ENCODE measurements at regions of chr16 and their contacts with region 1.

Region 1: DNA sequence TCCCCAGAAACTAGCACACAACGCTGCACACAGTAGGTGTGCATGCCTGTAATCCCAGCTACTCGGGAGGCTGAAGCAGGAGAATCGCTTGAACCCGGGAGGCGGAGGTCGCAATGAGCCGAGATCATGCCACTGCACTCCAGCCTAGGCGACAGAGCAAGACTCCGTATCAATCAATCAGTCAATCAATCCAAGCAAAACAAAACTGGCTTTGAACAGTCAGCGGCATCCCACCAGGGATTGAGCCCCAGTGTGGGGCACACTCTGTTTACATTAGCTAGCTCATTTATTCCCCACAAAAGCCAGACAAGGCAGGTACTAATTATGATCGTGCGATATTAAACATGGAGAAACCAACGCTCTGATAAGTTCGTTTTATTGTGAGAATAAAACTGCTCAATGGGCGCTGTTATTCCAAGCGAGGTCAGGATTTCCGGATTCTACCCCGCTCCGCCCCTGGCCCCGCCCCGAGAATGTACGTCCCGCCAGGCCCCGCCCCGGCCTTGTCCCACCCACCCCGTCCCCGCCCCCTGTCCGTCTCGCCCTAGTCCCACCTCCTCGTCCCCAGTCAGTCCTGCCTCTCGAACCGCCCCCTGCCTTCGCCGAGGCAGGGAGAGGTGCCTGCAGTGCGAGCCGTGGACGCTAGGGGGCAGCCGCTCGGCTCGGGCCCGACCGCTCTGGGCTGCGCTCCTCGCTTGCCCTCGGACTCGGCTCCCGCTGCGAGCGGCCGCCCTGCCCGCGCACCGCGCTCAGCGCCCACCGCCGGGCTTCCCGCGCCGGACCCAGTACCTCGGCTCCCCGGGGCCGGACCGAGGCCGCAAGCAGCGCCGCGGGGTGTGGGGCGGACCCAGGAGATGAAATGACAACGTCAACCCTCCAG is at the start of gene VPS4A:
- DNase-seq: peak; percentile 91 to 97 (median 96)
- H3K4me3 ChIP-seq: peak within 1 kb of the TSS; percentile 62 to 99 (median 91)
- H3K27ac ChIP-seq: peak within 1 kb of the TSS; percentile 46 to 94 (median 88)
- H3K27me3 ChIP-seq: no peaks in the 10 kb centered on the region
- CTCF ChIP-seq: peak; percentile 56 to 96 (median 87)
- total RNA-seq, gene VPS4A: 35.1 to 60.4 (median 47.0) TPM

Region 2: DNA sequence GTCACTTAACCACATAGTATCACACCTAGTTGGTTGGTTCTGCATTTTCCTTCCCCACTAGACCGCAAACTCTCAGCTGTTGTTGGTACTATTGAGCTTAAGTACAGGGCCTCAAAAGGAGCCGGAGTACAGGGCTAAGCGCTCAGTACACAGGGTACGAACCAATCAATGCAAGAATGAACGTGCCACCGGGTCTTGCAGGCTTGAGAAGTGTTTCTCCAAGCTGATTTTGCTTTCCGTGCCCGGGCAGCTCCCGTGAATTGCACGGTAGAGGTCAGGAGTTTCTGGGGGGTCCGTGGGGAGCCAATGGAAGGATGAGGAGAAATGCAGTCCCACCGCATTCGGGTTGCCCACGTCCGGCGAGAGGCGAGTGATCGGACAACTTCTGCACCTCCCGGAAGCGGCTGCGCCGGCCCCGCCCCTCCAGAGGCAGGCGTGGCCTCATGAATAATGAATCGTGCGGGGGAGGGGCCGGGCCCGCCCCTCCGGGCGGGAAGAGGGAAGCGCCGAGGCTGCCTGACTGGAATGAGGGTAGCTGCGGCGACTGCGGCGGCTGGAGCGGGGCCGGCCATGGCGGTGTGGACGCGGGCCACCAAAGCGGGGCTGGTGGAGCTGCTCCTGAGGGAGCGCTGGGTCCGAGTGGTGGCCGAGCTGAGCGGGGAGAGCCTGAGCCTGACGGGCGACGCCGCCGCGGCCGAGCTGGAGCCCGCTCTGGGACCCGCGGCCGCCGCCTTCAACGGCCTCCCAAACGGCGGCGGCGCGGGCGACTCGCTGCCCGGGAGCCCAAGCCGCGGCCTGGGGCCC is 124.0 kb before region 1 on chr16 and contains the start of gene SNTB2:
- intact Hi-C with region 1: loop called in 1 of 2 experiments (anchors 5 kb)
- DNase-seq: peak; percentile 79 to 95 (median 92)
- H3K4me3 ChIP-seq: peak within 1 kb of the TSS; percentile 58 to 90 (median 81)
- H3K27ac ChIP-seq: peak within 1 kb of the TSS in 55 of 59 donors; percentile 23 to 90 (median 78)
- H3K27me3 ChIP-seq: no peaks in the 10 kb centered on the region
- CTCF ChIP-seq: peak in 14 of 56 donors; percentile 7 to 35 (median 12)
- total RNA-seq, gene SNTB2: 24.5 to 81.3 (median 36.6) TPM

Region 3: GRCh38 chr16:69243479-69243878 is 67.4 kb before region 1 on chr16:
- intact Hi-C with region 1: no loop called
- DNase-seq: no peak
- H3K4me3 ChIP-seq: no peak overlapping the region
- H3K27ac ChIP-seq: no peak overlapping the region
- H3K27me3 ChIP-seq: no peaks in the 10 kb centered on the region
- CTCF ChIP-seq: no peak

Region 4: GRCh38 chr16:69330286-69331109 is 19.6 kb after region 1 on chr16 and contains the start of gene PDF:
- intact Hi-C with region 1: loop called in 1 of 2 experiments (anchors 2 kb)
- DNase-seq: peak; percentile 87 to 97 (median 92)
- H3K4me3 ChIP-seq: peak within 1 kb of the TSS; percentile 66 to 99 (median 83)
- H3K27ac ChIP-seq: peak within 1 kb of the TSS; percentile 33 to 96 (median 90)
- H3K27me3 ChIP-seq: no peaks in the 10 kb centered on the region
- CTCF ChIP-seq: peak in 55 of 56 donors; percentile 22 to 76 (median 51)
- total RNA-seq, gene PDF: 3.5 to 17.7 (median 8.1) TPM

Region 5: GRCh38 chr16:69339289-69340108 is 28.6 kb after region 1 on chr16 and contains the starts of genes COG8 and NIP7:
- intact Hi-C with region 1: loop called in 1 of 2 experiments (anchors 2 kb)
- DNase-seq: peak; percentile 89 to 98 (median 96)
- H3K4me3 ChIP-seq: peak within 1 kb of the TSS; percentile 53 to 100 (median 95)
- H3K27ac ChIP-seq: peak within 1 kb of the TSS; percentile 60 to 98 (median 92)
- H3K27me3 ChIP-seq: no peaks in the 10 kb centered on the region
- CTCF ChIP-seq: peak; percentile 76 to 98 (median 92)
- total RNA-seq, gene COG8: 30.0 to 57.6 (median 41.0) TPM
- total RNA-seq, gene NIP7: 7.2 to 21.6 (median 12.4) TPM

Region 6: GRCh38 chr16:69386596-69386995 is 75.7 kb after region 1 on chr16:
- intact Hi-C with region 1: loop called in 1 of 2 experiments (anchors 2 kb)
- DNase-seq: no peak
- H3K4me3 ChIP-seq: peak overlapping the region in 47 of 59 donors; percentile 62 to 91 (median 77)
- H3K27ac ChIP-seq: peak overlapping the region in 32 of 59 donors; percentile 65 to 96 (median 88)
- H3K27me3 ChIP-seq: no peaks in the 10 kb centered on the region
- CTCF ChIP-seq: no peak

Region 7: GRCh38 chr16:69566981-69567680 is 256.2 kb after region 1 on chr16:
- intact Hi-C with region 1: no loop called
- DNase-seq: peak in 1 of 10 donors; percentile 8
- H3K4me3 ChIP-seq: peak overlapping the region; percentile 69 to 98 (median 89)
- H3K27ac ChIP-seq: peak overlapping the region; percentile 76 to 100 (median 97)
- H3K27me3 ChIP-seq: no peaks in the 10 kb centered on the region
- CTCF ChIP-seq: peak in 3 of 56 donors; percentile 6 to 25 (median 9)